ENCODE measurements at regions of chr16 and their contacts with region 1.

Region 1: GRCh38 chr16:56964243-56965148 is 2.7 kb downstream of the CETP start:
- H3K4me3 Mint-ChIP-seq: no peak overlapping the region
- H3K27ac Mint-ChIP-seq: peak overlapping the region; percentile 76
- H3K4me1 Mint-ChIP-seq: peaks cover 72% of the 10 kb centered on the region
- H3K27me3 Mint-ChIP-seq: peaks cover 2% of the 10 kb centered on the region

Region 2: DNA sequence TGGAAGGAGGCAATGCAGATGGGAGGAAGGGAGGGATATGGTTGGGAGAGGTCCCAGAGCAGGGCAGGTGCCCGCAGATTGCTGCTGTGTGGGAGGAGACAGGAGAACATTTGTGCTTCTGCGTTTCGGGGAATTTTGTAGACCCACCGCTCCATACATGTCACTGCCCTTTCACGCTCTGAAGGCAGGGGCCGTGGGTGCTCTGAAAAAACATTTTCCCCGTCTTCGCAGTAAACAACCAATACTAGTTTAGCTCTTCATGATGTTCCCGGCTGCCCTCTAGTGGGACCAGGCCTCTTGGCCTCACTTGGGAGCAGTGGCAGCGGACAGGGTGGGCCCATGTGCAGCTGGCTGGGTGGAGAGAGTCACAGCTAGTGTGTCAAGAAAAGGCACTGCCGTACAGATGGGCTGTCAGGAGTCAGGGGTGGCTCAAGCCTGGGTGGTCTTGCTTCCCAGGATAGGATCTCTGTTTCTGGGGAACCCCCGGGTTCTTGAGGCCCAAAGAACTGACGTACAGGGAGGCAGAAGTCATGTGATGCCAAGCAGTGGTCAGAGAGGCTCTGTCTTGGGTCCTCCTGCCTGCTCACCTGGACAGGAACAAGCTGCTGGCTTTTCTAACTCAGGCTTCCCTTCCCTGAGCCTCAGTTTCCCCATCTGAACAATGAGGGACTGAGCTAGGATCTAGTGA is 81.3 kb after region 1 on chr16:
- intact Hi-C with region 1: loop called (anchors 1 kb)
- H3K4me3 Mint-ChIP-seq: peak overlapping the region; percentile 14
- H3K27ac Mint-ChIP-seq: peak overlapping the region; percentile 36
- H3K4me1 Mint-ChIP-seq: peaks cover 38% of the 10 kb centered on the region
- H3K27me3 Mint-ChIP-seq: no peaks in the 10 kb centered on the region

Measured in dendritic cell treated with granulocyte-macrophage colony-stimulating factor and Interleukin-4, amounts not matched to agents 40 ng/mL and 50 ng/mL, for 4 days (primary cell).